GM12878 (cell line): ENCODE measurements at regions of chr10 and their contacts with region 1.

Region 1: DNA sequence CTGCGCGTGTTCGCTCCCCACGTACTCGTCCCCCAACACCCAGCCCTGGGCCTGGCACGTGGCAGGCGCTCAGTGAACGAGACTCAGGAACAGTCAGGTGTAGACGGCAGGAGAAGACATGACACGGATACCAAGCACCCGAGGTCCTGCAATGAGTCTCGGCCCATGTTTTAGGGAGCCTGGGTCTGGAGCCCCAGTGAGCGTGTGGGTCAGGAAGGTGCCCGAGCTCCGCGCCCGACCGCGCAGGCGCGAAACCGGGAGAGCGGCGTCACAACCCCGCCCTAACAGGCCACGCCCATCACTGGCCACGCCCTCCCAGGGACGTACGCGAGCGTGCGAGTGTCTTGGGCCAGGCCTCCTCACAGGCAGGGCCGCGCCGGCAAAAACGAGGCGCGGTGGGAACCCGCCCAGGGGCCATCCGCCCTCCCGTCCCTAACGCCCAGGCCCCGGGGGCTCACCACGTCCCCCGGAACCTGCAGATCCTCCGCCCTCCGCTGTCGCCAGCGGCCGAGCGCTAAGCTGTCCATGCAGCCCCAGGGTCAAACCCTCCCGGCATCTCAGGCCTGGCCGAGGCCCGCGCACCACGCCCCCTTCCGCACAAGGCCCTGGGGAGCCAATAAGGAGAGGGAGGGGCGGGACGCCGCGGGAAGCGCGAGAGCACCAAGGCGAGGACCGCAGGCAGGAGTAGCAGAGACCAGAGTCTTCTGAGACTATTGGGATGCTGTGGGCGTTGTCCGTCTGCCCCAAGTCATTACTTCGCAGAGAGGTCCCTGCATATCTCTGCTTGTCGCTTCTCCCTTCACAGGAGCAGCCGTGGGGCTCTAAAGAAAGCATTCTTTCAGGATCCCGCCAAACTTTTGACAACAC is at the start of gene C10orf143:
- DNase-seq: peak; percentile 89
- ATAC-seq: peak; percentile 90
- H3K4me3 ChIP-seq: peak within 1 kb of the TSS; percentile 84
- H3K27ac ChIP-seq: peak within 1 kb of the TSS; percentile 87
- H3K4me1 ChIP-seq: peaks cover 17% of the 10 kb centered on the region
- H3K27me3 ChIP-seq: no peaks in the 10 kb centered on the region
- CTCF ChIP-seq: no peak
- EP300 ChIP-seq: 0 out of 4 replicates have a peak, but pooled peaks of 1 of the 2 experiments have one; percentile 20
- POLR2A ChIP-seq: peak; percentile 92
- RAD21 ChIP-seq: no peak
- polyA plus RNA-seq, gene C10orf143: 0.64 to 0.90 TPM

Region 2: GRCh38 chr10:129030996-129031843 is 1079.3 kb before region 1 on chr10:
- CTCF ChIA-PET with region 1: no interaction called
- POLR2A ChIA-PET with region 1: no interaction called
- RAD21 ChIA-PET with region 1: no interaction called
- SMC1A ChIA-PET with region 1: no interaction called
- in situ Hi-C with region 1: loop called (anchors 25 kb)
- intact Hi-C with region 1: no loop called
- DNase-seq: no peak
- ATAC-seq: peak; percentile 89
- H3K4me3 ChIP-seq: no peak overlapping the region
- H3K27ac ChIP-seq: no peak overlapping the region
- H3K4me1 ChIP-seq: no peaks in the 10 kb centered on the region
- H3K27me3 ChIP-seq: no peaks in the 10 kb centered on the region; a peak in 1 of 4 replicates
- CTCF ChIP-seq: peak; percentile 73 to 84 (median 82)
- EP300 ChIP-seq: no peak
- POLR2A ChIP-seq: no peak
- RAD21 ChIP-seq: peak; percentile 78

Region 3: DNA sequence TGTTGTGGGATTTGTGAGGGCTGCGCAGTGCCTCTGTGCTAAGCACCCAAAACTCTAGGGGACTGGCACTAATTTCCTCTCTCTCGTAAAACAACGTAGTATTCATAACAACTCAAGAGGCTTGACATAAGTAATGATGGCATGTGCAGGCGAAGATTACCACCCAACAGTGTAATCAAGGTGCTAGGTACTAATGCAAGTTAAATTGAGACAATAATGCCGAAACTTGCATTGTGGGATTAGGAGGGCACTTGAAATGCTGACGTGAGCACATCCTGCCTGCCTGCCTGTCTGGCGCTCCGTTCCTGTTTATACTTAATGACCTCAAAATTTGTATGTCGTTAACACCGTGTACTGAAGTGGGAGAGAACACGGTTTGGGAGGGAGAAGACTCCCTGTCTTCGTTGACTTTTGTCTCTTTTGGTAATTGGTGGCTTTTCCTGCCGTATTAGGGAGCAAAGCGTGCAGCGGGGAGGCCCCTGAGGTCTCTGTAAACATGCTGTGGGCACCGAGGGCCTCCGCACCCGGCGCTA is 504.4 kb before region 1 on chr10:
- CTCF ChIA-PET with region 1: no interaction called
- POLR2A ChIA-PET with region 1: no interaction called
- RAD21 ChIA-PET with region 1: no interaction called
- SMC1A ChIA-PET with region 1: no interaction called
- in situ Hi-C with region 1: no loop called
- intact Hi-C with region 1: loop called (anchors 1 kb)
- DNase-seq: peak; percentile 72
- ATAC-seq: peak; percentile 62
- H3K4me3 ChIP-seq: peak overlapping the region; percentile 38; the same call in 1 of the 2 replicates
- H3K27ac ChIP-seq: peak overlapping the region; percentile 51
- H3K4me1 ChIP-seq: peaks cover 36% of the 10 kb centered on the region
- H3K27me3 ChIP-seq: no peaks in the 10 kb centered on the region
- CTCF ChIP-seq: no peak
- EP300 ChIP-seq: peak; percentile 70 to 81; a peak in 3 of 4 replicates
- POLR2A ChIP-seq: no peak
- RAD21 ChIP-seq: no peak

Region 4: DNA sequence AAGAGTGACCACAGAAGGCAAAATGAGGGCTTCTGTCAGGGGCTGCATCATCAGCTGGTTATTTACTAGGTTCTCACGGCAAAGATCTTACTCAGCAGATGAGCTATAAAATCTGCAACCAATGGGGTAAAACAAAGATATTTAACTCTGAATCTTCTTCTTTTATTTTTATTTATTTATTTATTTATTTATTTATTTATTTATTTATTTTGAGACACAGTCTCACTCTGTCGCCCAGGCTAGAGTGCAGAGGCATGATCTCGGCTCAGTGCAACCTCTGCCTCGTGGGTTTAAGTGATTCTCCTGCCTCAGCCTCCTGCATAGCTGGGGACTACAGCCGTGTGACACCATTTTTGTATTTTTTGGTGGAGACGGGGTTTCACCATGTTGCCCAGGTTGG is 11.1 kb before region 1 on chr10:
- CTCF ChIA-PET with region 1: interaction called, 11 read pairs
- POLR2A ChIA-PET with region 1: no interaction called
- RAD21 ChIA-PET with region 1: no interaction called
- SMC1A ChIA-PET with region 1: no interaction called
- in situ Hi-C with region 1: no loop called
- intact Hi-C with region 1: no loop called
- DNase-seq: no peak
- ATAC-seq: no peak
- H3K4me3 ChIP-seq: no peak overlapping the region
- H3K27ac ChIP-seq: no peak overlapping the region
- H3K4me1 ChIP-seq: no peaks in the 10 kb centered on the region
- H3K27me3 ChIP-seq: no peaks in the 10 kb centered on the region
- CTCF ChIP-seq: no peak
- EP300 ChIP-seq: no peak
- POLR2A ChIP-seq: no peak
- RAD21 ChIP-seq: no peak

Region 5: DNA sequence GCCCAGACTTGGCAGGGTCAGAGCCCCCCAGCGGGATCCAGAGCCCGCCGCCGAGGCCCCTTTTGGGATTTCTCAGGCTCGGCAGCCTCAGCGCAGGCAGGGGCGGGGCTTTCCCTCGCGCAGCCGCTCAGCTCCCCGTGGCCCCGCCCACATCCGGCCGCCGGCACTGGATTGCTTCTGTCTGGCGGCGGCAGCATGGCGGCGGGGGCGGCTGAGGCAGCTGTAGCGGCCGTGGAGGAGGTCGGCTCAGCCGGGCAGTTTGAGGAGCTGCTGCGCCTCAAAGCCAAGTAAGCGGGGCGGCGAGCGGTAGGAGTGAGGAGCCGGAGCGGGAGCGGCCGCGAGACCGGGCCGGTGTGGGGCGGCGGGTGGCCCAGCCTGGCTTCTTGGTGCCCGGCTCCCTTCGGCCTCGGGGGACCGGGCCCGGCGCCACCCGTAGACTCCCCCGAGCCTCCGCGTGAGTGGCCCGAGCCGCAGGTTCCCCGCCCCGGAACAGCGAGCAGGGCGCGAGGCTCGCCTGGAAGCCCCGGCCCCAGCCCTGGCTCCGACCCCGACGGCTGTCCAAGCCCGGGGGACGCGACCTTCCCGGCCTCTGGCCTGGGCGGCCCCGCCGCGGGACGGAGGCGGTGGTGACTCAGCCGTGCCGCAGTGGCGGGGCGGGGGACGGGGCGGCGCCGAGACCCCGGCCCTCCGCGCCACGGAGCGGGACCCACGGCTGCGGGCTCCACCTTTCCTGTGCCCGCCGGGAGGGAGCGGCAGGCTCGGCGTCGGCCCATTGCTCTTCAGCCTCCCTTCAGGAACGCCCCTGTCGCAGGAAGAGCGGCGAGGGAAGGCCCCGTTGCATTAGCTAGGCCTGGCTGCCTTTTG is 26.0 kb after region 1 on chr10 and contains the start of gene GLRX3:
- CTCF ChIA-PET with region 1: interaction called, 45 read pairs
- POLR2A ChIA-PET with region 1: interaction called, 48 read pairs
- RAD21 ChIA-PET with region 1: interaction called, 55 read pairs
- SMC1A ChIA-PET with region 1: interaction called, 14 read pairs
- in situ Hi-C with region 1: no loop called
- intact Hi-C with region 1: loop called (anchors 1 kb)
- DNase-seq: no peak
- ATAC-seq: peak; percentile 91
- H3K4me3 ChIP-seq: peak within 1 kb of the TSS; percentile 68
- H3K27ac ChIP-seq: peak within 1 kb of the TSS; percentile 69
- H3K4me1 ChIP-seq: peaks cover 31% of the 10 kb centered on the region
- H3K27me3 ChIP-seq: no peaks in the 10 kb centered on the region; a peak in 1 of 4 replicates
- CTCF ChIP-seq: no peak
- EP300 ChIP-seq: no peak
- POLR2A ChIP-seq: peak; percentile 93
- RAD21 ChIP-seq: no peak
- polyA plus RNA-seq, gene GLRX3: 131 to 171 TPM